PC-3 (cell line): ENCODE measurements at regions of chr18 and their contacts with region 1.

Region 1: GRCh38 chr18:50878345-50879301 is at the start of gene ME2:
- DNase-seq: peak; percentile 72
- ATAC-seq: peak; percentile 93
- H3K4me3 ChIP-seq: peak within 1 kb of the TSS; percentile 75
- H3K27ac ChIP-seq: peak within 1 kb of the TSS; percentile 39; the same call in 1 of the 2 replicates
- H3K4me1 ChIP-seq: no peaks in the 10 kb centered on the region
- H3K27me3 ChIP-seq: no peaks in the 10 kb centered on the region
- CTCF ChIP-seq: no peak
- total RNA-seq, gene ME2: 21.9 and 29.1 TPM in 2 replicates

Region 2: GRCh38 chr18:51029694-51030536 is 151.3 kb after region 1 on chr18 and contains the start of gene SMAD4:
- CTCF ChIA-PET with region 1: no interaction called
- POLR2A ChIA-PET with region 1: interaction called, 4 read pairs
- intact Hi-C with region 1: loop called (anchors 5 kb)
- DNase-seq: peak; percentile 78
- ATAC-seq: peak; percentile 77
- H3K4me3 ChIP-seq: peak within 1 kb of the TSS; percentile 80
- H3K27ac ChIP-seq: 0 out of 2 replicates have a peak within 1 kb of the TSS, but pooled peaks have one; percentile 13
- H3K4me1 ChIP-seq: peaks cover 13% of the 10 kb centered on the region; the same call in 1 of the 2 replicates
- H3K27me3 ChIP-seq: no peaks in the 10 kb centered on the region
- CTCF ChIP-seq: no peak
- total RNA-seq, gene SMAD4: 19.7 and 42.8 TPM in 2 replicates